GM10248 (cell line): ENCODE measurements at regions of chr5 and their contacts with region 1.

Region 1: GRCh38 chr5:32585446-32586275 is at the start of gene SUB1:
- DNase-seq: peak; percentile 90
- CTCF ChIP-seq: no peak

Region 2: DNA sequence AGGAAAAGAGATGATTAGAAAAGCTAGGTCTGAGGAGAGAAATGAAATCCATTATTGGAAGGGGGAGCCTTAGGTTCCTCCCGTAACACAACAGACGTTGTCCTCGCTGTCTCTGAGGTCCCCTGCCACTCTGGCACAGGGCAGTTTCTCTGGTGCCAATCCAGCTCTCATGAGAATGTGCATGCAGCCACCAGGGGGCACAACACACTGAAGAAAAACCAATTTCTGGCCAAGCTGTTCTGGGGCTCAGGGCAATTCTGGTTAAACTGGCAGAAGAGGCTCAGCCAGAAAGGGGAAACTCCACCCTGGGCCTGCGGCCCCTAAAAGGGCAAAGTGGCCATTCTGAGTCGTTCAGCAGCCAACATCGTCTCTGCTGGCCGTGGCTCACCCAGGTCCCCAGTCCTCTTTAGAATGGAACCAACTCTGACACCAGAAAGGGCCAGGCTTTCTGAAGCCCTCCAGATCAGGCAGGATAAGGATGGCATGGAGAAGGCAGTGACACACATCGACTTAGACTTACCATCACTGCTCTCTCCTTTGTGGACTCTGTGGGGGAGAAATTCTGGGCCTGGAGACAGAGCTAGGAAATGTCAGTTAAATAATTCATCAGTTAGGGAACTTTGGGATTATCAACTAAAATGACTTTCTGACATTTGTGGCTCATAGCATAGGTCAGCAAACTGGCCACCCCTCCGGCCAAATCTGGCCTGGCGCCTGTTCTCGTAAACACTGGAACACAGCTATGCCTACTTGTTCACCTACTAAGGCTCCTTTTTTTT is 353.0 kb before region 1 on chr5:
- CTCF ChIA-PET with region 1: interaction called, 20 read pairs
- POLR2A ChIA-PET with region 1: no interaction called
- DNase-seq: peak; percentile 82
- CTCF ChIP-seq: peak; percentile 87

Region 3: GRCh38 chr5:32489791-32490582 is 95.7 kb before region 1 on chr5:
- CTCF ChIA-PET with region 1: interaction called, 191 read pairs
- POLR2A ChIA-PET with region 1: interaction called, 7 read pairs
- DNase-seq: peak; percentile 69
- CTCF ChIP-seq: peak; percentile 64

Region 4: DNA sequence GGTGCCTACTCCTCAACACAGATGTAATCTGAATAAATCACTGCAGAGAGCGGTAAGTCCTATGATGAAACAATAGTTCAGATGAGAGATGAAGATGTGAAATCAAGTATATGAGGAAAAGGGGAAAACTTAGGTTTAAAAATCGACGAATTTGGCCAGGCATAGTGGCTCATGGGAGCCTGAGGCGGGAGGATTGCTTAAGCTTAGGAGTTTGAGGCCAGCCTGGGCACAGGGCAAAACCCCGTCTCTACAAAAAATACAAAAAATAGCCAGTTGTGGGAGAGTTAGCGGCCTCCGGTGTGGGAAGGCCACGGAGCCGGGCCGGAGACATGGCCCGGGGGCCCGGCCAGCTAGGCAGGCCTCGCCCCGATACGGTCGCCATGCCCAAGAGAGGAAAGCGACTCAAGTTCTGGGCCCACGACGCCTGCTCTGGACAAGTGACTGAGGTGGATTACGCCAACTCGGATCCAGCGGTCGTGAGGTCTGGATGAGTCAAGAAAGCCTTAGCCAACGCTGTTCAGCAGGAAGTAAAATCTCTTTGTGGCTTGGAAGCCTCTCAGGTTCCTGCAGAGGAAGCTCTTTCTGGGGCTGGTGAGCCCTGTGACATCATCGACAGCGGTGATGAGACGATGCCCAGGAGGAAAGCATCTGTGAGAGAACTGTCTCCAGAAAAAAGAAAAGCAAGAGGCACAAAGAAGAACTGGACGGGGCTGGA is 63.1 kb before region 1 on chr5:
- CTCF ChIA-PET with region 1: interaction called, 13 read pairs
- POLR2A ChIA-PET with region 1: interaction called, 4 read pairs
- DNase-seq: no peak
- CTCF ChIP-seq: no peak

Region 5: DNA sequence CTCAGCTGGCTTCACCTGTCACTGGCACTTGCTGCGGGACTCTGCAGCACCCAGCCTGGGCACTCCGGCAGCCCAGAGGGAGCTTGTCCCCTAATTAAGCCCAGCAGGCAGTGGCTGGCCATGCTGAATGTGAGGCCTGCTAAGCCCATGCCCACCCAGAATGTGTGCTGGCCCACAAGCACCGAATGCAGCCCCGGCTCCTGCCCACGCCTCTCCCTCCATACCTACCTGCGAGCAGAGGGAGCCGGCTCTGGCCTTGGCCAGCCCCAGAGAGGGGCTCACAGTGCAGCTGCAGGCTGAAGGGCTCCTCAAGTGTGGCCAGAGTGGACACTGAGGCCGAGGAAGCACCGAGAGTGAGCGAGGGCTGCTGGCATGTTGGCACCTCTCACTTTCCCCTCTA is 32.7 kb before region 1 on chr5:
- CTCF ChIA-PET with region 1: interaction called, 10 read pairs
- POLR2A ChIA-PET with region 1: no interaction called
- DNase-seq: no peak
- CTCF ChIP-seq: no peak

Region 6: GRCh38 chr5:32613050-32613672 is 27.5 kb after region 1 on chr5:
- CTCF ChIA-PET with region 1: interaction called, 14 read pairs
- POLR2A ChIA-PET with region 1: no interaction called
- DNase-seq: peak; percentile 81
- CTCF ChIP-seq: peak; percentile 81

Region 7: GRCh38 chr5:32679218-32679617 is 93.6 kb after region 1 on chr5:
- CTCF ChIA-PET with region 1: no interaction called
- POLR2A ChIA-PET with region 1: no interaction called
- DNase-seq: no peak
- CTCF ChIP-seq: no peak